CD4-positive, alpha-beta T cell (primary cell): ENCODE measurements at regions of chr4 and their contacts with region 1.

Region 1: GRCh38 chr4:1809754-1810511 is 16.8 kb downstream of the FGFR3 start:
- DNase-seq: peak; percentile 38 to 79 (median 60)
- ATAC-seq: peak; percentile 77
- H3K4me3 ChIP-seq: no peak overlapping the region
- H3K4me3 Mint-ChIP-seq: no peak overlapping the region
- H3K27ac ChIP-seq: no peak overlapping the region
- H3K27ac Mint-ChIP-seq: no peak overlapping the region
- H3K4me1 ChIP-seq: no peaks in the 10 kb centered on the region
- H3K4me1 Mint-ChIP-seq: no peaks in the 10 kb centered on the region
- H3K27me3 ChIP-seq: no peaks in the 10 kb centered on the region
- H3K27me3 Mint-ChIP-seq: no peaks in the 10 kb centered on the region
- CTCF ChIP-seq: peak; percentile 67

Region 2: DNA sequence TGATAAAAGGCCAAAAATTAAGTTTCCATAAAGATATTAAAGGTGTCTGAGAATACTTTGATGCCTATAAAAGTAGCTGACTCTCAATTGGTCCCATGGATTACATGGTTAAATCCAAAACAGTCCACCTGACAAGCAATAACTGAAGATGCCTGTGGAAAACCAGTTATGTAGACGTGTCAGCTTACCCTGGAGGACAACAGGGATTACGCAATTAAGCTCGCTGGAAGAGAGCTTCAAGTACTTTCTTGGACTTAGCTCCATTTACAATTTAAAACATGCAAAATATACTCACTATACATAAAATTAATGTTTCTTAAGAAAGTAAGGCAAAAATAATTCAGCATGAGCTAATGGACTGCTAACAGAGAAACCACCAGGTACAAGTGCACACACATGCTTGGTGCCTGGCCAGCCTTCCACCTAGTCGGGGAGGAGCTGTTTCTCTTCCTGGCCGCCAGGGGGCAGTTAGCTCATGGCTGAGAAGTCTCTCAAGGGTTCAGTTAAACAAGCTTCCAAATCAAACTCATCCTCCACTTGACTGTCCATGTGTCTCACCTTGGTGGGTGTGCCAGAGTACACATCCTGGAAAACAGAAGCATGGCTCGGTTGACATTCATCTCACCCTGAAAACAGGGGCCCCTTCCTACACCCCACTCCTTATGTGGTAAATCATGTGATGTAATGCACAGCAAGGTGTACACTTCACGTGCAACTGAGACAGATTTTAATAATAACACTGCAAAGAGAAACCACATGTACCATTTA is 116.6 kb before region 1 on chr4:
- CTCF ChIA-PET with region 1: no interaction called
- POLR2A ChIA-PET with region 1: no interaction called
- intact Hi-C with region 1: loop called (anchors 2 to 5 kb)
- DNase-seq: peak; percentile 63 to 91 (median 75)
- ATAC-seq: peak; percentile 93
- H3K4me3 ChIP-seq: no peak overlapping the region
- H3K4me3 Mint-ChIP-seq: no peak overlapping the region
- H3K27ac ChIP-seq: peak overlapping the region in 1 of 2 donors; percentile 17
- H3K27ac Mint-ChIP-seq: peak overlapping the region; percentile 68
- H3K4me1 ChIP-seq: peaks cover 5% of the 10 kb centered on the region
- H3K4me1 Mint-ChIP-seq: peaks cover 5% of the 10 kb centered on the region
- H3K27me3 ChIP-seq: no peaks in the 10 kb centered on the region
- H3K27me3 Mint-ChIP-seq: no peaks in the 10 kb centered on the region
- CTCF ChIP-seq: peak; percentile 87

Region 3: DNA sequence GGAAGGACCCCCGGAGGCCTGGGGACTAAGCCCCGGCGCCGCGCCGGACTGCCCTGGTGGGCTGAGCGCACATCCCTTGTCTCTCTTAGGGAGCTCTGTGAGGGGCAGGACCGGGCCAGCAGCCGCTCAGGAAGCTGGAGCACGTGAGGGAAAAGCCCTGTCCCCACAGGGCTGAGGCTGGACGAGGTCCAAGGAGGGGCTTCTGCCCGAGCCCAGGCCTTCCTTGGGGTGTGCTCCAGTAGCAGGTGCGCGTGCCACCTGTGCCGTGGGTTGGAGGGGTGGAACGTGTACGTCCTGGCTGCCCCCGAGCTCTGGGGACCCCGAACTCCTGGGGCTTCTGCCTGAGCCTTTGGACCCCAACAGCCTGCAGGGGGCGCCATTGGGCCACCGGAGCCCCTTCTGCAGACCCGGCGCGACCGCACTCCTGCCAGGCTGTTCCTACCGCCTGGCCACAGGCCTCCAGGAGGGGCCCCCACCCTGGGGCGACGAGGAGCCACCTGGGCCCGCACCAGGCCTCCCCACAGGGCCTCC is 61.4 kb before region 1 on chr4:
- CTCF ChIA-PET with region 1: interaction called, 5 read pairs
- POLR2A ChIA-PET with region 1: no interaction called
- intact Hi-C with region 1: loop called in 1 of 2 experiments (anchors 2 kb)
- DNase-seq: peak; percentile 64 to 86 (median 74)
- ATAC-seq: peak; percentile 62
- H3K4me3 ChIP-seq: no peak overlapping the region
- H3K4me3 Mint-ChIP-seq: no peak overlapping the region
- H3K27ac ChIP-seq: no peak overlapping the region
- H3K27ac Mint-ChIP-seq: no peak overlapping the region
- H3K4me1 ChIP-seq: peaks cover 33% of the 10 kb centered on the region
- H3K4me1 Mint-ChIP-seq: no peaks in the 10 kb centered on the region
- H3K27me3 ChIP-seq: no peaks in the 10 kb centered on the region
- H3K27me3 Mint-ChIP-seq: no peaks in the 10 kb centered on the region
- CTCF ChIP-seq: peak; percentile 68

Region 4: GRCh38 chr4:1763550-1764080 is 46.3 kb before region 1 on chr4:
- CTCF ChIA-PET with region 1: no interaction called
- POLR2A ChIA-PET with region 1: no interaction called
- intact Hi-C with region 1: loop called in 1 of 2 experiments (anchors 5 kb)
- DNase-seq: no peak
- ATAC-seq: no peak
- H3K4me3 ChIP-seq: no peak overlapping the region
- H3K4me3 Mint-ChIP-seq: no peak overlapping the region
- H3K27ac ChIP-seq: no peak overlapping the region
- H3K27ac Mint-ChIP-seq: no peak overlapping the region
- H3K4me1 ChIP-seq: peaks cover 3% of the 10 kb centered on the region
- H3K4me1 Mint-ChIP-seq: no peaks in the 10 kb centered on the region
- H3K27me3 ChIP-seq: peaks cover 22 to 31% of the 10 kb centered on the region in 2 experiments
- H3K27me3 Mint-ChIP-seq: peaks cover 30% of the 10 kb centered on the region
- CTCF ChIP-seq: no peak

Region 5: GRCh38 chr4:1784789-1785591 is 24.9 kb before region 1 on chr4:
- CTCF ChIA-PET with region 1: no interaction called
- POLR2A ChIA-PET with region 1: no interaction called
- intact Hi-C with region 1: no loop called
- DNase-seq: no peak
- ATAC-seq: no peak
- H3K4me3 ChIP-seq: no peak overlapping the region
- H3K4me3 Mint-ChIP-seq: no peak overlapping the region
- H3K27ac ChIP-seq: no peak overlapping the region
- H3K27ac Mint-ChIP-seq: no peak overlapping the region
- H3K4me1 ChIP-seq: no peaks in the 10 kb centered on the region
- H3K4me1 Mint-ChIP-seq: no peaks in the 10 kb centered on the region
- H3K27me3 ChIP-seq: no peaks in the 10 kb centered on the region
- H3K27me3 Mint-ChIP-seq: no peaks in the 10 kb centered on the region
- CTCF ChIP-seq: no peak

Region 6: GRCh38 chr4:1899149-1900086 is 89.5 kb after region 1 on chr4:
- CTCF ChIA-PET with region 1: interaction called, 3 read pairs
- POLR2A ChIA-PET with region 1: interaction called, 4 read pairs
- intact Hi-C with region 1: loop called (anchors 1 to 2 kb)
- DNase-seq: peak; percentile 56 to 90 (median 63)
- ATAC-seq: peak; percentile 98
- H3K4me3 ChIP-seq: no peak overlapping the region
- H3K4me3 Mint-ChIP-seq: no peak overlapping the region
- H3K27ac ChIP-seq: no peak overlapping the region
- H3K27ac Mint-ChIP-seq: no peak overlapping the region
- H3K4me1 ChIP-seq: peaks cover 9% of the 10 kb centered on the region
- H3K4me1 Mint-ChIP-seq: peaks cover 10% of the 10 kb centered on the region
- H3K27me3 ChIP-seq: no peaks in the 10 kb centered on the region
- H3K27me3 Mint-ChIP-seq: no peaks in the 10 kb centered on the region
- CTCF ChIP-seq: peak; percentile 90